ENCODE measurements at regions of chr14 and their contacts with region 1.

Region 1: GRCh38 chr14:20477211-20477876 is 8.1 kb downstream of the PNP start:
- DNase-seq: peak; percentile 69
- H3K4me3 ChIP-seq: peak overlapping the region in 1 of 3 experiments; percentile 20
- H3K27ac ChIP-seq: peak overlapping the region; percentile 77
- H3K4me1 ChIP-seq: peaks cover 28% of the 10 kb centered on the region
- H3K27me3 ChIP-seq: no peaks in the 10 kb centered on the region
- CTCF ChIP-seq: no peak
- POLR2A ChIP-seq: peak; percentile 68

Region 2: DNA sequence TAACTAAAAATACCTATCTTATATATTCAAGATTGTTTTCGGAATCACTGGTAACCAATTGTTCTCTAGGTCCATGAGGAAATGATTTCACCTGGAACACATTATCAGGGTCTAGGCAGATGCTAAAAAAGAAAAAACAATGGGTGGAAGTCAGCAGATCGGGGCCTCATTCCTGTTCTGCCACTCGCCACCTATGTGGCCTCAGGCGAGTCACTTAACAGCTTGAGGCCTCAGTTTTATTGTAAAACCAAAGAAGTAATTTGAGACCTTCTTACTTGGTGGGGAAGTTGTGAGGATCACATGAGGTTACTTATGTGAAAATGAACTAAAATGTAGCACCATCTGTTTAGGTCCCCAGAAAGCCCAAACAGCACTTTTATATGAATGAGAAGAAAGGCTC is 21.8 kb after region 1 on chr14:
- CTCF ChIA-PET with region 1: interaction called, 3 read pairs
- POLR2A ChIA-PET with region 1: no interaction called
- dilution Hi-C with region 1: no loop called
- intact Hi-C with region 1: loop called (anchors 1 kb)
- DNase-seq: peak; percentile 76
- H3K4me3 ChIP-seq: no peak overlapping the region
- H3K27ac ChIP-seq: peak overlapping the region; percentile 81
- H3K4me1 ChIP-seq: peaks cover 40% of the 10 kb centered on the region
- H3K27me3 ChIP-seq: no peaks in the 10 kb centered on the region
- CTCF ChIP-seq: no peak
- POLR2A ChIP-seq: no peak

Region 3: GRCh38 chr14:20516906-20517305 is 39.6 kb after region 1 on chr14:
- CTCF ChIA-PET with region 1: interaction called, 4 read pairs
- POLR2A ChIA-PET with region 1: no interaction called
- dilution Hi-C with region 1: no loop called
- intact Hi-C with region 1: loop called (anchors 1 kb)
- DNase-seq: peak; percentile 82
- H3K4me3 ChIP-seq: peak overlapping the region in 1 of 3 experiments; percentile 2
- H3K27ac ChIP-seq: peak overlapping the region; percentile 81
- H3K4me1 ChIP-seq: peaks cover 31% of the 10 kb centered on the region
- H3K27me3 ChIP-seq: no peaks in the 10 kb centered on the region
- CTCF ChIP-seq: no peak
- POLR2A ChIP-seq: no peak

Region 4: DNA sequence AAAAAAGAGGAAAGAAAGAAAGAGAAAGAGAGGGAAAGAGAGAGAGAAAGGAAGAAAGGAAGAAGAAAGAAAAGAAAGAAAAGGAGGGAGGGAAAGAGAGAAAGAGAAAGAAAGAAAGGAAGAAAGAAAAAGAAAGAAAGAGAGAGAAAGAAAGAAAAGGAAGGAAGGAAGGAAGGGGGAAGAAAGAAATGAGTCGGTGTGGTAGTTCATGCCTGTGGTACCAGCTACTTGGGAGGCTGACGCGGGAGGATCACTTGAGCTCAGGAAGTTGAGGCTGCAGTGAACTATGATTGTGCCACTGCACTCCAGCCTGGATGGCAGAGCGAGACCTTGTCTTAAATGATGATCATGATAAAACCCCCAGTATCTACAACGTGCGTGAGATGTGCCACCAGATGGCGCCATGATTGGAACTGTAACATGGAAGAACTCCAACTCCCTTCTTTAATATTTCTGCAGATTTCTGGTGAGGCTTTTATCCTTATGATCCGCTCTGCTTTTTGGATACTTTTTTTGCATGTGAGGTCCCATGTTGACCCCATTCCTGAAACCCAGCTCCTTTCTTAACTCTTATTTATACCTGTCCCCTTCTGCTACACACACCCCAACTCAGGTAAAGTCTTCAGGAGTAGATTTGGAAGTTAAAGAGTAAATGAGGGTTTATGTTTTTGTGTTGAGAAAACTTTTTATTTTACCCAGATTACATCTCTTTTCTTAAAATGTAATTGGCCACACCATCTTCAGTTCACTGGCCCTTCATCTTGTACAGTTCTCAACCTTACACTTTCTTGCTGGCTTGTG is 53.6 kb after region 1 on chr14:
- CTCF ChIA-PET with region 1: interaction called, 3 read pairs
- POLR2A ChIA-PET with region 1: no interaction called
- dilution Hi-C with region 1: no loop called
- intact Hi-C with region 1: loop called (anchors 2 kb)
- DNase-seq: peak; percentile 71
- H3K4me3 ChIP-seq: no peak overlapping the region
- H3K27ac ChIP-seq: no peak overlapping the region
- H3K4me1 ChIP-seq: no peaks in the 10 kb centered on the region
- H3K27me3 ChIP-seq: peaks cover 4 to 28% of the 10 kb centered on the region in 2 experiments
- CTCF ChIP-seq: peak; percentile 67 to 72
- POLR2A ChIP-seq: no peak

Region 5: DNA sequence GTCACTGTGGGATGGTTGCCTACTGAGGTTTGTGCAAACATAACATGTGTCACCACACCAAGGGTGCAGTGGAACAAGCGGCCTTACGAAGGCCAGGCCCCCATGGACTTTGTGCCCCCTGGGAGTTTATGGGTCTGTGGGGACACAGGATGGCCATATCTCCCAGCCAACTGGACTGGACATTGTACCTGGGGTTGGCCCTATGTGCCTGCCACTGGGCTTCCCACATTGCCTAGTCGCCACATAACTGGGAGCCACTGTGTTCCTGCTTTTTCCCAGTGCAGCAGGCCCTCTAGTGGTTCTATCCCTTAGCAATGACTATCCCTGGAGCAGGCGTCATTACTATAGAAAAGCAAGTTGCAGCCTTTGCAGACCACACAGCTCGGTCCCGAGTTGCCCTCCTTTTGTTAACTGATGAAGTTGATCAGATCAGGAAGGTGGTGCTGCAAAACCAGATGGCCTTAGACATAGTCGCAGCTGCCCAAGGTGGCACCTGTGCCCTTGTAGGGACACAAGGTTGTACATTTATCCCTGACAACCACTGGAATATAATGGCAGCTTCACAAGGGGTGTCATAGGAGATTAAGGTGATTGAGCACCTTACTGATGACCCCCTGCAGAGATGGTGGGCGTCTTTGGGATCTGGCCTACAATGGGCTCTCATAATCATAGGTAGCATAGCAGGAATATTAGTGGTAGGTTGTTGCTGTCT is 129.0 kb after region 1 on chr14:
- CTCF ChIA-PET with region 1: interaction called, 5 read pairs
- POLR2A ChIA-PET with region 1: no interaction called
- dilution Hi-C with region 1: no loop called
- intact Hi-C with region 1: loop called (anchors 1 kb)
- DNase-seq: peak; percentile 55
- H3K4me3 ChIP-seq: no peak overlapping the region
- H3K27ac ChIP-seq: no peak overlapping the region
- H3K4me1 ChIP-seq: peaks cover 4% of the 10 kb centered on the region
- H3K27me3 ChIP-seq: peaks cover 0 to 3% of the 10 kb centered on the region in 2 experiments
- CTCF ChIP-seq: peak; percentile 66 to 79
- POLR2A ChIP-seq: no peak

Measured in endothelial cell of umbilical vein (primary cell).